MCF 10A (cell line): ENCODE measurements at regions of chr21 and their contacts with region 1.

Region 1: DNA sequence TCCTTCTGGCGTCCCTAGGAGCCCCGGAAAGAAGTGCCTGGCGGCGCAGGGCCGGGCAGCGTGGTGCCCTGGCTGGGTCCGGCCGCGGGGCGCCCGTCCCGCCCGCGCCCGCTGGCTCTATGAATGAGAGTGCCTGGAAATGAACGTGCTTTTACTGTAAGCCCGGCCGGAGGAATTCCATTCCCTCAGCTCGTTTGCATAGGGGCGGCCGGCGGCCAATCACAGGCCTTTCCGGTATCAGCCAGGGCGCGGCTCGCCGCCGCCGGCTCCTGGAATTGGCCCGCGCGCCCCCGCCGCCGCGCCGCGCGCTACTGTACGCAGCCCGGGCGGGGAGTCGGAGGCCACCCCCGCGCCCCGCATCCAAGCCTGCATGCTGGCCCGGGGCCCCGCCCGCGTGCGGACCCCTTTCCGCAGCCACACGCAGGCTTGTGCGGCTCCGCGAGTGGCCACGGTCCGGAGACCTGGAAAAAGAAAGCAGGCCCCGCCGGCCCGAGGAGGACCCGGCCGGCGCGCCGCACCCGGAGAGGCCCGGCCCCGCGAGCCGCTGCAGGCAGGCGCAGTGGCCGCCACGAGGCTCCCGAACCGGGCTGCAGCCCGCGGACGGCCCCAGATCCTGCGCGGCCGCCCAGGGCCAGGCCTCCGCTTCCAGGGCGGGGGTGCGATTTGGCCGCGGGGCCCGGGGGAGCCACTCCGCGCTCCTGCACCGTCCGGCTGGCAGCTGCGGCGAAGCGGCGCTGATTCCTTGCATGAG is 160.4 kb downstream of the RUNX1 start:
- DNase-seq: peak; percentile 96
- H3K4me3 Mint-ChIP-seq: peak overlapping the region; percentile 99
- H3K27ac Mint-ChIP-seq: peak overlapping the region; percentile 91
- H3K4me1 Mint-ChIP-seq: peaks cover 4% of the 10 kb centered on the region
- H3K27me3 Mint-ChIP-seq: no peaks in the 10 kb centered on the region
- CTCF ChIP-seq: no peak

Region 2: DNA sequence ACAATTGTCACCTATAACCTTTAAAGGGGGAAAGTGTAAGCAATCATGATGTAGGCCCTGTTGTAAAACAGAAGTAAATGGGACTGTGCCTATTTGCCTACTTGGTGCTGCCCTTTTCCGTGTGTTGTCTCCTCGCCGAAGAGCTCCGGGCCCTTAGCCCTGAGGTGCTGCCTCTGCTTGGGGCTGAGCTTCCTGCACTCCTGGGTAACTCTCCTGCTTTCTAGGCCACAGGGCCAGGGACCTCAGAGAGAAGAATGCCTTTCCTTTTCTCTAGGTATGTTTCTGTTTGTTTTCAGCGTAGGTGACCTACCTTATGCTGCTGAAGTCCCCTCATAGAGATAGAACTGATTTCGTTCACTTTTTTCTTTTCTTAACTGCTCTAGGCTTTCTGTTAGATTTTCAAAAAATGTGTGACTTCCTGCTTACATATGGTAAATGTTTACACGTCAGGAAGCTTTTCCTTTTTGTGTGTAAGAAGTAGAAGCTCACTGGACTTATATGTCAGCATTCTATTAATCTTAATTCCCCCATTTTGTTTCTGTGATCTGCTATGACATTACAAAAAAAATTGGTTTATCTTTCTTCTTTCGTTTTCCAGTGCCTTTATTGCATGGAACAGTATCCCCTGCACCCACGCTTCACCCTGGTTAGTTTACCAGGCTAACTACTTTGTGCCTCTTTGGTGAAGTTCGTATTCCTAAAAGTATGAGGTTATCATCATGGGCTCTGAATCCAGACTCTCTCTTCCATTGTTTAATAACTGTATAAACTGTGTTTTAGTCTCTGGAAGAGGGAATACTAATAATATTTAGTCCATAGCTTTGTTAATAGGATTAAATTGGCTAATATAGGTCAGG is 1184.8 kb before region 1 on chr21:
- CTCF ChIA-PET with region 1: no interaction called
- POLR2A ChIA-PET with region 1: no interaction called
- intact Hi-C with region 1: no loop called
- DNase-seq: no peak
- H3K4me3 Mint-ChIP-seq: no peak overlapping the region
- H3K27ac Mint-ChIP-seq: peak overlapping the region; percentile 1
- H3K4me1 Mint-ChIP-seq: no peaks in the 10 kb centered on the region
- H3K27me3 Mint-ChIP-seq: no peaks in the 10 kb centered on the region
- CTCF ChIP-seq: no peak

Region 3: GRCh38 chr21:34745557-34746255 is 143.0 kb before region 1 on chr21:
- CTCF ChIA-PET with region 1: interaction called, 31 read pairs
- POLR2A ChIA-PET with region 1: interaction called, 101 read pairs
- intact Hi-C with region 1: loop called (anchors 1 kb)
- DNase-seq: peak; percentile 83
- H3K4me3 Mint-ChIP-seq: no peak overlapping the region
- H3K27ac Mint-ChIP-seq: no peak overlapping the region
- H3K4me1 Mint-ChIP-seq: peaks cover 26% of the 10 kb centered on the region
- H3K27me3 Mint-ChIP-seq: no peaks in the 10 kb centered on the region
- CTCF ChIP-seq: peak; percentile 95

Region 4: DNA sequence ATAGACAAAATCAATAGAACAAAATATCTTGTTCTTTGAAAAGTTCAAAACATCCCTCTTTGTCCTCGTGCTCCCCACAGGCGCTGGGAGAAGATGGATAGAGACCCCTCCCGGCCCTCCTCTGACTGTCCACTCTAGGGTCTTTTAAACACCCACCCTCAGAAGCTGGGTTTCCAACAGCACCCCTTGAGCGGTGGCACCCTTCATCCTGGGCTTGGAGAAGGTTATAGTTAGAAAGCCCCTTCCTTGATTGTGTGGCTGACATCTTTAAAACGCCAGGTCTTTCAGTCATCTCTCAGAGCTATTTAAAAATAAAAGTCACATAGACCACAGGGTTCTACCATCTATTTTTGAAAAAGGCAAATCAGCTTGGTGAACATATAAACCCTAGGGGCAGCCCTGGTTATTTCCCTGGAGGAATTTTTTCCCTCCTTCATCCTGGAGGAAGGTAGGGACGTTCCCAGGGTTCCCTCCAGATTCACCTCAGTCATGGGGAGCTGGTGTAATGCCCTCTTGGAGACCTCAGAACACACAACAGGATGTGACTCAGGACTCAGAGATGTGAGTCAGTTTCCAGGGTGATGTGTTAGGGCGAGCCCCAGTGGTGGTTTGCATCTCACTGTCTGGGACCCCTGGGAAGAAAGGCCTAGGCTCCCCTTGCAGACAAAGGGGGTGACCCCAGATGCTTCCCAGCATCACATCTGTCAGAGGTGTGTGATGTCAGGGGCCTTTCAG is 81.4 kb before region 1 on chr21:
- CTCF ChIA-PET with region 1: interaction called, 13 read pairs
- POLR2A ChIA-PET with region 1: interaction called, 972 read pairs
- intact Hi-C with region 1: loop called (anchors 2 kb)
- DNase-seq: peak; percentile 98
- H3K4me3 Mint-ChIP-seq: peak overlapping the region; percentile 47
- H3K27ac Mint-ChIP-seq: peak overlapping the region; percentile 99
- H3K4me1 Mint-ChIP-seq: peaks cover 40% of the 10 kb centered on the region
- H3K27me3 Mint-ChIP-seq: no peaks in the 10 kb centered on the region
- CTCF ChIP-seq: no peak

Region 5: DNA sequence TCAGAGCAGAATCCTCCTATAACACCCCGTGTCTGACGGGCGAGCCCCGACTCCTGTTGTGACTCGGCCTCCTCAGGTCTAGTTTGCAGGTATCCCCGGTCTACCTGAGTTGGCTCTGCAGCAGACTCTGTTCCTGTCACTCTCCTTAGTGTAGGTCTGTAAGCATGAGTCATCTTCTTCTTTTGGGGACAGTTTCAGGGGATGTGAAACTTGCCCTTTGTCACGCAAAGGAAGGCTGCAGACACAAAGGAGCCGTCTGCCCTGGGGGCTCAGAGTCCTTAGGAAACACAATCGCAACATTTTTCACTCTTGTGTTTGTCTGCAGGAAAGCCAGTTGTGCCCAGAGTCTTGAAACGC is 22.8 kb before region 1 on chr21:
- CTCF ChIA-PET with region 1: interaction called, 6 read pairs
- POLR2A ChIA-PET with region 1: interaction called, 414 read pairs
- intact Hi-C with region 1: loop called (anchors 1 kb)
- DNase-seq: peak; percentile 71
- H3K4me3 Mint-ChIP-seq: peak overlapping the region; percentile 48
- H3K27ac Mint-ChIP-seq: peak overlapping the region; percentile 94
- H3K4me1 Mint-ChIP-seq: peaks cover 74% of the 10 kb centered on the region
- H3K27me3 Mint-ChIP-seq: no peaks in the 10 kb centered on the region
- CTCF ChIP-seq: no peak

Region 6: GRCh38 chr21:34916446-34916845 is 27.7 kb after region 1 on chr21:
- CTCF ChIA-PET with region 1: no interaction called
- POLR2A ChIA-PET with region 1: no interaction called
- intact Hi-C with region 1: no loop called
- DNase-seq: no peak
- H3K4me3 Mint-ChIP-seq: no peak overlapping the region
- H3K27ac Mint-ChIP-seq: no peak overlapping the region
- H3K4me1 Mint-ChIP-seq: peaks cover 13% of the 10 kb centered on the region
- H3K27me3 Mint-ChIP-seq: no peaks in the 10 kb centered on the region
- CTCF ChIP-seq: no peak

Region 7: DNA sequence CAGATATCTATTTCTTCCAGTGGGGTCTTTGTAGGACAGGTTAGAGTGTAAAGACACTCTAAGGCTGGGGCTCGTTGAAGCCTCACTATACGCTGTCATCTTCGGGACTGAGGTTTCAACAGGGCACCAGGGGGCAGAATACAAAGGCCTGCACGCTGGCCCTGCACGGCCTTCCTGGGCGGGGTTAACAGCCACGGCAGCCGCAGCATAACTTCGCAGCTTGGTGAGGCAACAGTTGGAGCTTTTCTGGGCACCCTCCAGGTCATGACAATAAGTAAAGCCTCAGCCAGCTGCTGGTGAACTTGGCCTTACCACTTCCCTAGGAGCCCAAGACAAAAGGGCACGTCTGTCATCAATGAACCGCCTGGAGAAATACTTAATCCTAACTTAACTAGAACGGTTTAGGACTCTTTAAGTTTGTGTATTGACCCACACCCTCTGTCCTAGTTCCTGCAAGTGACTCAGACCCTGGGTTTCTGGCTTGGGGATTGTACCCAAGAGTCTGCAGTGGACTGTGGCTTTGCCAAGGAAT is 162.6 kb after region 1 on chr21:
- CTCF ChIA-PET with region 1: interaction called, 9 read pairs
- POLR2A ChIA-PET with region 1: interaction called, 66 read pairs
- intact Hi-C with region 1: loop called (anchors 1 kb)
- DNase-seq: peak; percentile 95
- H3K4me3 Mint-ChIP-seq: no peak overlapping the region
- H3K27ac Mint-ChIP-seq: peak overlapping the region; percentile 83
- H3K4me1 Mint-ChIP-seq: peaks cover 48% of the 10 kb centered on the region
- H3K27me3 Mint-ChIP-seq: no peaks in the 10 kb centered on the region
- CTCF ChIP-seq: peak; percentile 73

Region 8: DNA sequence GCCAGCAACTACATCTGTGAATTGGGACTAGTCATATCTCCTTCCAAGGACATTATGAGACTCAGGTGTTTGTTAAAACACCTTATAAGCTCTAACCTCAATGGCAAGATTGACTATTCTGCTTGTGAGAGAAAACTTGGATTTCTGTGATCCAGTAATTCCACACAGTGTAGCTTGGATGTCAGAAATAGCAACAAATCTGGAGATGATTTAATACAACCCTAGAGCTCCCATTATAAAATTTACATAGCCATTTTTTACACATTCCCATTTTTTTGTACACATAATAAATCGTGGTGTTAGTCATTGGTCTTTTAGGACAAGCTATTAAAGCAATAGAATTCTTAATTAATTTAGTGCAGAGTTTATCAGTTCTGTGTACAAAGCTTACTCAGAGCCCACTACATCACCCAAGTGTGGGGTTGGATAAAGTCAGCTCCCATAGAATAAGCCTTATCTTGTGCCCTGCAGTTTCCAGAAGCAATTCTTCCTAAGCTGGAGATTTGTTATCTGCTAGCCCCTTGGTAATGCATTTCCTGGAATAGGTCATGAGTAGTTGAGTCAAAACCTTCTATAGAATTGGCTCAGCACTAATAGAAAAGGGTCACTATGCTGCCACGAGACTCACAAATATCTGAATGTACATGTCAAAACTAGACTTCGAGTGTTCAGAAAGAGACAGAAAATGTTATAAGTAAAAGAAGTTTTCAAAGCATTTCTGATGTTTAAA is 594.4 kb after region 1 on chr21:
- CTCF ChIA-PET with region 1: no interaction called
- POLR2A ChIA-PET with region 1: no interaction called
- intact Hi-C with region 1: no loop called
- DNase-seq: no peak
- H3K4me3 Mint-ChIP-seq: no peak overlapping the region
- H3K27ac Mint-ChIP-seq: no peak overlapping the region
- H3K4me1 Mint-ChIP-seq: no peaks in the 10 kb centered on the region
- H3K27me3 Mint-ChIP-seq: peaks cover 63% of the 10 kb centered on the region
- CTCF ChIP-seq: no peak

Region 9: DNA sequence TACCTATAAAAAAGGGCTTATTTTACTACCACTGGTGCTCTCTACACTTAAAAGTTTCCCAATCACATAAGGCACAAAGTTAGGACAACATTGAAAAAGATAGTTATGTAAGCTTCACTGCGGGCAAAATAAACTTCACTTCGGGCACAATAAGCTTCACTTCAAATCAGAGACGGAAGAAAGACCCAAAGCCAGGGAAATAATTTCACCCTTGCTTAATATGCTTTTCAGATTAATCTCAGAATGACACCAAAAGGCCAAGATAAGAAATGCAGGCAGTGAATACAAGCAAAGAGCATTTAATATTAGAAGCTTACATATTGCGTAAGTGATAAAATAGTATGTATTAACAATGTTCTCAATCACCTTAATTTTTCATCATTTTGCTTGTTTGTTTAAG is 727.3 kb after region 1 on chr21:
- CTCF ChIA-PET with region 1: interaction called, 4 read pairs
- POLR2A ChIA-PET with region 1: interaction called, 7 read pairs
- intact Hi-C with region 1: loop called (anchors 1 kb)
- DNase-seq: peak; percentile 44
- H3K4me3 Mint-ChIP-seq: no peak overlapping the region
- H3K27ac Mint-ChIP-seq: no peak overlapping the region
- H3K4me1 Mint-ChIP-seq: peaks cover 27% of the 10 kb centered on the region
- H3K27me3 Mint-ChIP-seq: no peaks in the 10 kb centered on the region
- CTCF ChIP-seq: peak; percentile 47

Region 10: GRCh38 chr21:36028127-36029069 is 1139.7 kb after region 1 on chr21:
- CTCF ChIA-PET with region 1: no interaction called
- POLR2A ChIA-PET with region 1: no interaction called
- intact Hi-C with region 1: loop called (anchors 5 kb)
- DNase-seq: peak; percentile 70
- H3K4me3 Mint-ChIP-seq: no peak overlapping the region
- H3K27ac Mint-ChIP-seq: no peak overlapping the region
- H3K4me1 Mint-ChIP-seq: peaks cover 7% of the 10 kb centered on the region
- H3K27me3 Mint-ChIP-seq: no peaks in the 10 kb centered on the region
- CTCF ChIP-seq: peak; percentile 93